ENCODE measurements at regions of chr11 and their contacts with region 1.

Region 1: GRCh38 chr11:71991494-71991893 is 7.2 kb upstream of the IL18BP start:
- DNase-seq: no peak
- ATAC-seq: peak; percentile 82
- H3K4me3 Mint-ChIP-seq: peak overlapping the region; percentile 62
- H3K27ac Mint-ChIP-seq: peak overlapping the region; percentile 82
- H3K4me1 Mint-ChIP-seq: peaks cover 60% of the 10 kb centered on the region
- H3K27me3 Mint-ChIP-seq: no peaks in the 10 kb centered on the region
- CTCF ChIP-seq: no peak

Region 2: DNA sequence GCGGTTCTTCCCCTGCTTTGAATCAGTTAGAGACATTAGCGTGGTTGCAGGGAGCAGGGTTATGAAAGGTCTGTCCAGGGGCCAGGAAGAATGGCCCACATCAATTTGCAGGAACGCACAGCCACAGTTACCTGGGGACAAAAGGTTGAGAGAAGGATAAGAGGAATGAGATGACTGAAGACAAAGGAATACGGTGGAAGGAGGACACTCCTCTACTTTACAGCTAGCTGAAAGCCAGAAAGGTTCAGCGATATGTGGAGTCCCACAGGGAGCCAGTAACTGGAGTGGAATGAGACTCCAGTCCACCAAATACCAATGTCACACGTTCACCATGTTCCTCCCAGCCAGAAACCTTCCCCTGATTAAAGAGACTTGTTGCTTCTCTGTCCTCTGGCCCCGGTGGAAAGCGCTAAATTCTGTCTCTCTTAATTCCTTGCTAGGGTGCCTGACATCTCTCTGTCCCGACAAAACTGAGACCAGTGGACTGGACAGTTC is 73.8 kb before region 1 on chr11:
- CTCF ChIA-PET with region 1: no interaction called
- POLR2A ChIA-PET with region 1: no interaction called
- intact Hi-C with region 1: no loop called
- DNase-seq: no peak
- ATAC-seq: no peak
- H3K4me3 Mint-ChIP-seq: no peak overlapping the region
- H3K27ac Mint-ChIP-seq: no peak overlapping the region
- H3K4me1 Mint-ChIP-seq: no peaks in the 10 kb centered on the region
- H3K27me3 Mint-ChIP-seq: no peaks in the 10 kb centered on the region
- CTCF ChIP-seq: no peak

Region 3: DNA sequence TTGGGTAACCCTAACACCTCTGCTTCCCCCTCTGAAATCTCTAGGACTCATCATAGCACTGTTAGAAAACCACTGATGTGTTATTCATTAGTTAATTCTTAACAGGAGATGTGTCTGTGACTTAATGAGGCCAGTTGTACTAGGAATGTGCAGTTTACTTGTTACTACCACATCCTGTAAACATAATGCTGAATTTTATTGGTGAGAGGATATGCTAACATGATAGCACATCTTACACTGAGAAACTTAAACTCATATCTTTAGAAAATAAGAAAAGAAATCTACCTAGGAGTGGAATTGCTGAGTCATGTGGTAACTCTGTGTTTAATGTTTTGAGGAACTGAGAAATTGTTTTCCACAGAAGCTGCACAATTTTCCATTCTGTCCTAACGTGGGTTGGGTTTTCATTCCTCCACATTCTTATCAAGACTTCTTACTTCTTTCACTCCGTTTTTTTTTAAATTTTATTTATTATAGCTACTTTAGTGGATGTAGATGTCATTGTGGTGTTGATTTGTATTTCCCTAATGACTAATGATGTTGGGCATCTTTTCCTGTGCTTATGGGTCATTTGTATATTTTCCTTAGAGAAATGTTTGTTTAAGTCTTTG is 29.0 kb before region 1 on chr11:
- CTCF ChIA-PET with region 1: no interaction called
- POLR2A ChIA-PET with region 1: no interaction called
- intact Hi-C with region 1: loop called (anchors 1 kb)
- DNase-seq: no peak
- ATAC-seq: peak; percentile 77
- H3K4me3 Mint-ChIP-seq: no peak overlapping the region
- H3K27ac Mint-ChIP-seq: peak overlapping the region; percentile 75
- H3K4me1 Mint-ChIP-seq: peaks cover 19% of the 10 kb centered on the region
- H3K27me3 Mint-ChIP-seq: no peaks in the 10 kb centered on the region
- CTCF ChIP-seq: no peak